ENCODE measurements at regions of chrX and their contacts with region 1.

Region 1: GRCh38 chrX:128518508-128518907 is 466.3 kb upstream of the ACTRT1 start:
- DNase-seq: no peak
- H3K4me3 ChIP-seq: no peak overlapping the region
- H3K27ac ChIP-seq: no peak overlapping the region
- H3K4me1 ChIP-seq: no peaks in the 10 kb centered on the region
- H3K27me3 ChIP-seq: no peaks in the 10 kb centered on the region
- CTCF ChIP-seq: peak in 2 of 3 experiments; percentile 48 to 64; a peak in 3 of 4 replicates
- EP300 ChIP-seq: no peak
- POLR2A ChIP-seq: no peak
- RAD21 ChIP-seq: peak; percentile 78

Region 2: GRCh38 chrX:128504496-128504895 is 14.0 kb before region 1 on chrX:
- CTCF ChIA-PET with region 1: interaction called, 10 read pairs
- POLR2A ChIA-PET with region 1: no interaction called
- DNase-seq: no peak
- H3K4me3 ChIP-seq: no peak overlapping the region
- H3K27ac ChIP-seq: no peak overlapping the region
- H3K4me1 ChIP-seq: no peaks in the 10 kb centered on the region
- H3K27me3 ChIP-seq: no peaks in the 10 kb centered on the region
- CTCF ChIP-seq: no peak
- EP300 ChIP-seq: no peak
- POLR2A ChIP-seq: no peak
- RAD21 ChIP-seq: no peak

Region 3: GRCh38 chrX:128728943-128729342 is 210.4 kb after region 1 on chrX:
- CTCF ChIA-PET with region 1: no interaction called
- POLR2A ChIA-PET with region 1: no interaction called
- DNase-seq: no peak
- H3K4me3 ChIP-seq: no peak overlapping the region
- H3K27ac ChIP-seq: no peak overlapping the region
- H3K4me1 ChIP-seq: no peaks in the 10 kb centered on the region
- H3K27me3 ChIP-seq: no peaks in the 10 kb centered on the region
- CTCF ChIP-seq: no peak
- EP300 ChIP-seq: no peak
- POLR2A ChIP-seq: no peak
- RAD21 ChIP-seq: no peak

Measured in H1 (cell line).